ENCODE measurements at regions of chr9 and their contacts with region 1.

Region 1: GRCh38 chr9:129052592-129052991 is 16.2 kb downstream of the MIGA2 start:
- DNase-seq: no peak
- ATAC-seq: no peak
- H3K4me3 ChIP-seq: no peak overlapping the region
- H3K27ac ChIP-seq: no peak overlapping the region
- H3K4me1 ChIP-seq: peaks cover 10% of the 10 kb centered on the region
- H3K27me3 ChIP-seq: no peaks in the 10 kb centered on the region
- CTCF ChIP-seq: no peak
- EP300 ChIP-seq: no peak
- POLR2A ChIP-seq: no peak
- RAD21 ChIP-seq: no peak

Region 2: GRCh38 chr9:129102901-129103594 is 50.5 kb after region 1 on chr9:
- CTCF ChIA-PET with region 1: no interaction called
- POLR2A ChIA-PET with region 1: no interaction called
- in situ Hi-C with region 1: no loop called
- intact Hi-C with region 1: loop called (anchors 2 kb)
- DNase-seq: peak; percentile 61
- ATAC-seq: peak; percentile 92
- H3K4me3 ChIP-seq: no peak overlapping the region
- H3K27ac ChIP-seq: no peak overlapping the region
- H3K4me1 ChIP-seq: peaks cover 9% of the 10 kb centered on the region; the same call in 1 of the 2 replicates
- H3K27me3 ChIP-seq: no peaks in the 10 kb centered on the region
- CTCF ChIP-seq: peak; percentile 63
- EP300 ChIP-seq: no peak
- POLR2A ChIP-seq: no peak
- RAD21 ChIP-seq: no peak; the same call in 1 of the 2 replicates